Caco-2 (cell line): ENCODE measurements at regions of chr9 and their contacts with region 1.

Region 1: DNA sequence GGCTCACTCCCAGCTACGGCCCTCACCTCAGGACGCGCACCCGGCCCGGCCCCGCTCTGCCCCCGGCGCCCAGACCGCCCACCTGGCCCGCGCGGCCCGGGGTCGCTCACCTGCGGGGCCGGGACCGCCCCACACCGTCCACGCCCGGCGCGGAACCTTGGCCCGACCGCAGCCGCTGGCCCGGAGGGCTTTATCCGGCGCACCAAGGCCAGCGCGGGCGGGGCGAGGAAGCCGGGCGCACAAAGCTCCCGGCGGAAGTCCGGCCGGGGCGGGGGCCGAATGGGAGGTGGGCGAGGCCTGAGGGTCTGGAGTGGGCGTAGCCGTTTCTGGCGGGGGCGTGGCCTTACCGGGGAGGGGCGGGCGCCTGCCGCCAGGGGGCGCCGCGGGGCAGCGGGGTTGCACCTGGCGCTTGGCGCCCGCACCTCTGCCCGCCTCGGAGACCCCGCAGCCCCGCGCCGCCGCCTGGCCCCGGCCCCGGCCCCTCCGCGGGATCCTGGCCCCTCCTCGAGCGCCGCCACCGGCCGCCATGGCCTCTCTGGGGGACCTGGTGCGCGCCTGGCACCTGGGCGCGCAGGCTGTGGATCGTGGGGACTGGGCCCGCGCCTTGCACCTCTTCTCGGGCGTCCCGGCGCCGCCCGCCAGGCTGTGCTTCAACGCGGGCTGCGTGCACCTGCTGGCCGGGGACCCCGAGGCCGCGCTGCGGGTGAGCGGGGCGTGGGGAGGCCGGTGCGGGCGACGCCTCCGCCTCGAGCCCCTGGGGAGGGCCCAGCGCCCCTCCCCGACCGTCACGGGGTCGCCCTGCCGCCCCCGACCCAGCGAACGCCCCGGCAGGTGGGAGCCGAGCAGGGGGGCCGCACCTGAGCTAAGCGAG is at the starts of genes EXD3 and NOXA1:
- DNase-seq: peak; percentile 94 to 97
- H3K4me3 ChIP-seq: peak within 1 kb of the TSS; percentile 73
- H3K4me3 Mint-ChIP-seq: peak within 1 kb of the TSS; percentile 78
- H3K27ac Mint-ChIP-seq: peak within 1 kb of the TSS; percentile 58
- H3K4me1 ChIP-seq: peaks cover 16% of the 10 kb centered on the region
- H3K4me1 Mint-ChIP-seq: peaks cover 6% of the 10 kb centered on the region
- H3K27me3 ChIP-seq: no peaks in the 10 kb centered on the region
- H3K27me3 Mint-ChIP-seq: no peaks in the 10 kb centered on the region
- CTCF ChIP-seq: peak; percentile 64 to 67
- total RNA-seq, gene EXD3: 10.9 and 11.2 TPM in 2 replicates
- total RNA-seq, gene NOXA1: 7.3 and 8.6 TPM in 2 replicates

Region 2: GRCh38 chr9:136545966-136546698 is 877.1 kb before region 1 on chr9 and contains the start of gene NOTCH1:
- CTCF ChIA-PET with region 1: interaction called, 12 read pairs
- POLR2A ChIA-PET with region 1: no interaction called
- intact Hi-C with region 1: no loop called
- DNase-seq: peak; percentile 88 to 89
- H3K4me3 ChIP-seq: peak within 1 kb of the TSS; percentile 53
- H3K4me3 Mint-ChIP-seq: peak within 1 kb of the TSS; percentile 80
- H3K27ac Mint-ChIP-seq: peak within 1 kb of the TSS; percentile 51
- H3K4me1 ChIP-seq: peaks cover 24% of the 10 kb centered on the region
- H3K4me1 Mint-ChIP-seq: peaks cover under 1% of the 10 kb centered on the region
- H3K27me3 ChIP-seq: no peaks in the 10 kb centered on the region
- H3K27me3 Mint-ChIP-seq: no peaks in the 10 kb centered on the region
- CTCF ChIP-seq: no peak
- total RNA-seq, gene NOTCH1: 5.5 and 6.3 TPM in 2 replicates

Region 3: GRCh38 chr9:137286975-137287383 is 136.3 kb before region 1 on chr9:
- CTCF ChIA-PET with region 1: interaction called, 15 read pairs
- POLR2A ChIA-PET with region 1: no interaction called
- intact Hi-C with region 1: no loop called
- DNase-seq: peak; percentile 83 to 89
- H3K4me3 ChIP-seq: no peak overlapping the region
- H3K4me3 Mint-ChIP-seq: no peak overlapping the region
- H3K27ac Mint-ChIP-seq: peak overlapping the region; percentile 9
- H3K4me1 ChIP-seq: no peaks in the 10 kb centered on the region
- H3K4me1 Mint-ChIP-seq: no peaks in the 10 kb centered on the region
- H3K27me3 ChIP-seq: no peaks in the 10 kb centered on the region
- H3K27me3 Mint-ChIP-seq: no peaks in the 10 kb centered on the region
- CTCF ChIP-seq: peak; percentile 75 to 84

Region 4: GRCh38 chr9:137295238-137295811 is 127.9 kb before region 1 on chr9:
- CTCF ChIA-PET with region 1: interaction called, 9 read pairs
- POLR2A ChIA-PET with region 1: interaction called, 10 read pairs
- intact Hi-C with region 1: loop called (anchors 5 kb)
- DNase-seq: peak in 1 of 2 experiments; percentile 81
- H3K4me3 ChIP-seq: peak overlapping the region; percentile 42
- H3K4me3 Mint-ChIP-seq: peak overlapping the region; percentile 74
- H3K27ac Mint-ChIP-seq: peak overlapping the region; percentile 98
- H3K4me1 ChIP-seq: peaks cover 30% of the 10 kb centered on the region
- H3K4me1 Mint-ChIP-seq: peaks cover 7% of the 10 kb centered on the region
- H3K27me3 ChIP-seq: no peaks in the 10 kb centered on the region
- H3K27me3 Mint-ChIP-seq: no peaks in the 10 kb centered on the region
- CTCF ChIP-seq: peak in 1 of 2 experiments; percentile 51

Region 5: DNA sequence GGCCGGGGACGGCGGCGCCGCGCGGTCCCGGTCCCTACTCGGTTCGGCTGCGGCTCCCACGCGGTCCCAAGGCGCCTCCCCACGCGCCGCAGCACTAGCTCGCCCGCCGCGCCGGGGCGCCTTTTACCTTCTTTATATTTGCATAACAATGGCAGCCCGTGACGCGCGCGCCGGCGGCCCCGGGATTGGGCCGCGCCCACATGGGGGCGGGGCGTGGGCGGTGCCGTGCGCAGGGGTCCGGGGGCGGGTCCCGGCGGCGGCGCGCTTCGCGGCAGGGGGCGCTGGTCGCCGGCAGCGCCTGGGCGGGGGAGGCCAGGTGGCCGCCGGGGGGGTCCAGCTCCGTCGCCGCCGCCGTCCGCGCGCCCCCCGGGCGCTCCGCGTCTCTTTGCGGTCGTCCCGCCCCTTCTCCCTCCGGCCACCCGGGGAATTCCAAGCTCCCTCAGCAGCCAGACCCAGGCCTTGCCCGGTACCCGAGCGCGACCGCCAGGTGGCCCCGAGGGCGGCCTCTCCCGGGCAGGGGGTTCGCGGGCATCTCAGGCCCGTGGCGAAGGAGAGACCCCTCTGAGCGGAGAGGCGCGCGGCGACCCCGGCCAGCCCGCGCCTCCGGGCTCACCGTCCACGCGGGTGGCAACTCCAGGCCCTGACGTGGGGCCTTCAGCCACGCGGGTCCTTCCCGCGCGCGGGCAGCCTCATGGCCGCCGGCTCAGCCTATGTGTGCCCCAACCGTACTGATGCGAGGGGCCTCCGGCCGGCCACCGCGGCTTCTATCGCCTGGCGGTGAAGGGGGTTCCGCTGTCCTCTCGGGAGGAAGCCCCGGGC is 120.9 kb before region 1 on chr9 and contains the start of gene NRARP:
- CTCF ChIA-PET with region 1: interaction called, 15 read pairs
- POLR2A ChIA-PET with region 1: interaction called, 11 read pairs
- intact Hi-C with region 1: loop called (anchors 5 kb)
- DNase-seq: peak; percentile 92 to 96
- H3K4me3 ChIP-seq: peak within 1 kb of the TSS; percentile 99
- H3K4me3 Mint-ChIP-seq: peak within 1 kb of the TSS; percentile 90
- H3K27ac Mint-ChIP-seq: peak within 1 kb of the TSS; percentile 84
- H3K4me1 ChIP-seq: peaks cover 16% of the 10 kb centered on the region
- H3K4me1 Mint-ChIP-seq: no peaks in the 10 kb centered on the region
- H3K27me3 ChIP-seq: no peaks in the 10 kb centered on the region
- H3K27me3 Mint-ChIP-seq: no peaks in the 10 kb centered on the region
- CTCF ChIP-seq: peak; percentile 71 to 77
- total RNA-seq, gene NRARP: 22.1 and 24.7 TPM in 2 replicates

Region 6: GRCh38 chr9:137396227-137396626 is 27.0 kb before region 1 on chr9:
- CTCF ChIA-PET with region 1: interaction called, 10 read pairs
- POLR2A ChIA-PET with region 1: no interaction called
- intact Hi-C with region 1: no loop called
- DNase-seq: peak in 1 of 2 experiments; percentile 21
- H3K4me3 ChIP-seq: no peak overlapping the region
- H3K4me3 Mint-ChIP-seq: no peak overlapping the region
- H3K27ac Mint-ChIP-seq: no peak overlapping the region
- H3K4me1 ChIP-seq: peaks cover 5% of the 10 kb centered on the region; the same call in 1 of the 2 replicates
- H3K4me1 Mint-ChIP-seq: no peaks in the 10 kb centered on the region
- H3K27me3 ChIP-seq: no peaks in the 10 kb centered on the region
- H3K27me3 Mint-ChIP-seq: no peaks in the 10 kb centered on the region
- CTCF ChIP-seq: no peak